ENCODE measurements at regions of chr9 and their contacts with region 1.

Region 1: DNA sequence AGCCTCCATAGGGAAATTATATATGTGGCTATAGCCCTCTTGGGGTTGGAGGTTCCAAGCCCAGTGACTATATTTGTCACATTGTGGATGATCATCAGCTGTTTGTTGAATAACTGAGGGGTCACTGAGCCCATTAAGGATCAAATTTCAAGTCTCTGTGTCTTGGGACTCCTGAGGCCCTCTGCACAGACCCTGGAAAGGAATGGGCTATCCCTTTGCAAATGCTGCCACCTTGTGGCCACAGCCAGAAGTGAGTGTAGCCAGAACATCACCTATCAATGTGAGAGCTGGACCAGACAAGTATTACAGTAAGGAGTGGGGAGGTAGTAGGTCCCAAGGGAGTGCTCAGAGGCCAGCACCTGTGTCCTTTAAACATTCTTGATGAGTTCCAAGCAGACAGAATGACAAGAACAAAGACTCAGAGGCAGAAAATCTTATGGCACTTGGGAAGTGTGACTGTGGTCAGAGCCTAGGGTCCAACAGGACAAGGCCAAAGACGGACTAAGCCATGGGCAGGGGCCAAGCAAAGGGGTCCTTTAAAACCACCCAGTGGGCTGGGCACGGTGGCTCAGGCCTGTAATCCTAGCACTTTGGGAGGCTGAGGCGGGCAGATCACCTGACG is 8.2 kb downstream of the RPP25L start:
- H3K4me3 ChIP-seq: no peak overlapping the region
- H3K27ac ChIP-seq: no peak overlapping the region
- H3K4me1 ChIP-seq: no peaks in the 10 kb centered on the region
- CTCF ChIP-seq: peak; percentile 77

Region 2: DNA sequence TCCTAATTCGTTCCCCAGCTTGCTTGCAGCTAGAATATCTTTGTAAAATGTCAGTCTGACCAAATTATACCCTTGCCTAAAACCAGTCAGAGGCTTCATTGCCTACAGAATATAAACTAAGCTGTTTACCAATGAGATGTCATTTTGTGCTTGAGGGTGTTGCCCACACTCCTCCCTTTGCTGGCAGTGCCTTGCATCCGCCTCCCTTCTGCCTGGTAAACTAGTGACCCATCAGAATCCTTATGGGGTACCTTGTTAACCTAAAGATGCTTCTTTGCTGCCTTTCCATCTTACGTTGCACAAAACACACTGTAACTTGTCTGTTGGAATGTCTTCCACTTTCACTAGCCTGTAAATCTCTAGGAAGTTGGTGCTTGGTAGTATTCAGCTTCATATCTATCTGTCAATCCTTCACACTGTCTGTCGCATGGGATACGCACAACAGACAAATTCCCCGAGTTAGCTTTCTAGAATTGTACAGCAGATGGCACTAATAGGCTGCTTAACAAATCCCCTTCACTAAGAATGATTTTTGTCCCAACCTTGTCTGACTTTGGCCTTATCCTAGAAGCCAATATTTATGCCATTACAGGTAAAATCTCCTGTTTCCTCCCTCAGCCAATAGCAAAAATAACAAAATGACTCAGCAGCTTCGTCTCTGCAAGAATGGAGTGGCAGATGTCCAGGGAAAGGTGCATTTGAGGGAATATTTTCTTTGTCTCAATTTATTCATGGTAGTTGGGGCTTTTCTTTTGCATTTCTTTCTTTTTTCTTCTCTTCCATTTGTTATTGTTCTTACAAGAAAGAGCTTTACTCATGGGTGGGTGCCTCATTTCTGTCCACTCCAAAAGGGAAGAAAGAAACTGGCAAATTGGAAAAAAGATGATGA is 271.4 kb before region 1 on chr9:
- CTCF ChIA-PET with region 1: interaction called, 22 read pairs
- POLR2A ChIA-PET with region 1: no interaction called
- H3K4me3 ChIP-seq: no peak overlapping the region
- H3K27ac ChIP-seq: no peak overlapping the region
- H3K4me1 ChIP-seq: no peaks in the 10 kb centered on the region
- CTCF ChIP-seq: peak; percentile 48; the same call in 1 of the 2 replicates

Region 3: DNA sequence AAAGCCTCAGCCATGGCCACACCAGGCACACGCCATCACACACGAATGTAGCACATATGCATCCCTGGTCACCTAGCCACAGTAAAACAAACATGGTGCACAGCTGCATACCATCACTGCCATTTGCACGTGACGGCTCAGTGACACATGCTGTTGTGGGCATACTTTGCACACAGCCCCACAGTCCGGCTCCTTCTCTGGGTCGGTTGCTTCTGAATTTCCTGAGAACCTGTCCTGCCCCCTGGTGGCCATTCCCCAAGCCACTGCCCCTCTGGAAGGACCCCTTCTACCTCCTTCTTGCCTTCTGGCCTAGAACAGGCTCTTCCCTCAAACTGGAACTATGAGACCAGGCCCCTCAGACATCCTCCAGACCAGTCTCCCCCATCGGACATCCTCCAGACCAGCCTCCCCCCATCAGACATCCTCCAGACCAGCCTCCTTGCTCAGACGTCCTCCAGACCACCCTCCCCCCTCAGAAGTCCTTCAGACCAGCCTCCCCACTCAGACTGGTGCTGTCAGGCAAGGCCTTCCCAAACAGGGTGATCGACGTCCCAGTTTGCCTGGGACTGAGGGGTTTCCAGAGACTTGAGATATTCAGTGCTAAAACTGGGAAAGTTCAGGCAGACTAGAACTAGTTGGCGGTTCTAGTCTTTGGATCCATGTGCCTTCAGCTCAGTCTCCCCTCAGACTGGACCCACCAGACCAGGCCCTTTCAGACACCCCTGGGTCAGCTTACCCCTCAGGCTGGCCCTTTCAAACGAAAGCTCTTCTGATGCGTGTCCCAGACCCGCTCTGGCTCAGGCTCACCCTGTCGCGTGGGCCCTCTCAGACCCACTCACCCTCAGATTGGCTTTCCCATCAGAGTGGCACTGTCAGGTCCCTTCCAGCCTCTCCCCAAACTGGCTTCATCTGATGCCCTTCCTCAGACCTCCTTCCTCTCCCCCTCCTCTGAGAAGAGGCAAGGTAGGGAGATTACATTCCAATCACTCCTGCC is 56.6 kb before region 1 on chr9:
- CTCF ChIA-PET with region 1: interaction called, 101 read pairs
- POLR2A ChIA-PET with region 1: no interaction called
- H3K4me3 ChIP-seq: no peak overlapping the region
- H3K27ac ChIP-seq: no peak overlapping the region
- H3K4me1 ChIP-seq: no peaks in the 10 kb centered on the region
- CTCF ChIP-seq: peak; percentile 38; the same call in 1 of the 2 replicates

Region 4: GRCh38 chr9:34578241-34579103 is 25.2 kb before region 1 on chr9:
- CTCF ChIA-PET with region 1: interaction called, 11 read pairs
- POLR2A ChIA-PET with region 1: no interaction called
- H3K4me3 ChIP-seq: no peak overlapping the region
- H3K27ac ChIP-seq: no peak overlapping the region
- H3K4me1 ChIP-seq: no peaks in the 10 kb centered on the region
- CTCF ChIP-seq: no peak

Region 5: DNA sequence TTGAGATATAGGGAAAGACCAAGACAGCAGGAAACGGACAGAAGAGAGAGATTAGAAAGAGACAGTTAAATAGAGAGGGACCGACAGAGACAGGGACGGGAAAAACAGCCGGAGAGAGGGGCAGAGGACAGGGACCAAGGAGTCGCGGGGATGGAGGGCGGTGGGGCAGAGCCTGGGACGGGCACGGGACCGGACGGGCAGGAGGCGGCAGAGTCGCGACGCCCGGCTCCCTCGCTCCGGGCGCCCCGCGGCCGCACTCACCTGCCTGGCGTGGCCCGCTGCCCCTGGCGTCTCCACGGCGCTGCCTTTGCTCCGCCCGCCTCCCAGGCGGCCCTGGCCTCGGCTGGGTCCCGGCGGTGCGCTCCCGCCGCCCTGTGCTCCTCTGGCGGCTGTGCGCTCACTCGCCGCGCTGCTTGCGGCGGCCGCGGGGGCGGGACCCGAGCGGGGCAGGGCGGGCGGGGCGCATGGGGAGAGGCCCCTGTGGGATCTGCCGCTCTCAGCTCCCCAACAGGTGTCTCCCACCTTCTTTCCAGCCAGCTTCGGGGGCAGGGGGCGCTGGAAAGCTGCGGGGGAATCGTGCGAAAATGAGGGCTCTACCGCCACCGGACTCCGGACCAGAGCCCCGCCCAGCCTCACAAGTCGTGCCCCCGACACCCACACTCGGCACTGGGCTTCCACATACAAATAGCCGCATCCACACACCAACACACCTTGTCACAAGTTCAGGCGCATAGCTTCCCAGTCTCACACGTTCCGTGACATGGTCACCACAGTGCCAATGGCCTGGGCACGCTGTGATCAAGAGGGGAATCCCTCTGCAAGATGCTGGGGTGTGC is 25.2 kb after region 1 on chr9 and contains the start of gene ARID3C:
- CTCF ChIA-PET with region 1: interaction called, 164 read pairs
- POLR2A ChIA-PET with region 1: no interaction called
- H3K4me3 ChIP-seq: peak within 1 kb of the TSS; percentile 35
- H3K27ac ChIP-seq: no peak within 1 kb of the TSS
- H3K4me1 ChIP-seq: no peaks in the 10 kb centered on the region; the same call in 1 of the 2 replicates
- CTCF ChIP-seq: no peak

Region 6: DNA sequence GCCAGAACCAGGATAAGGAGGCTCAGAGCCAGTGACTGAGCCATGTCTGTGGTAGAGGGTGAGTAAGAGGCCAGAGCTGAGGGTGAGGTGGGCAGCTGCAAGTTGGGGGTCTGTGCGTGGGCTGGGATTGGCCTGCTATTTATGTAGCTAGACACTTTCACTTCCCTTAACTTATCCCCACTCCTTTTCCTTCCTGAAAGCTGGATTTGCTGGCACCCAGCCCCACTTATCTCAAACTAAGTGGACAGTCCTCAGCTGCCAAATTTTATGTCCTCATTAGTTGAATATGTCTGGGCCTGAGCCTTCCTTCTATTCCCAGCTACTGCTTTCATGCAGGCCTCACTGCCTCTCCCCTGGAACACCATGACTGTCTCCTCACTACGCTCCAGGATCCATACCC is 106.3 kb after region 1 on chr9 and contains the start of gene CCL21:
- CTCF ChIA-PET with region 1: no interaction called
- POLR2A ChIA-PET with region 1: no interaction called
- H3K4me3 ChIP-seq: no peak within 1 kb of the TSS
- H3K27ac ChIP-seq: no peak within 1 kb of the TSS
- H3K4me1 ChIP-seq: no peaks in the 10 kb centered on the region
- CTCF ChIP-seq: no peak

Region 7: GRCh38 chr9:34759432-34760134 is 155.9 kb after region 1 on chr9:
- CTCF ChIA-PET with region 1: no interaction called
- POLR2A ChIA-PET with region 1: no interaction called
- H3K4me3 ChIP-seq: no peak overlapping the region
- H3K27ac ChIP-seq: no peak overlapping the region
- H3K4me1 ChIP-seq: no peaks in the 10 kb centered on the region
- CTCF ChIP-seq: no peak